GM13976 (cell line): ENCODE measurements at regions of chr17 and their contacts with region 1.

Region 1: DNA sequence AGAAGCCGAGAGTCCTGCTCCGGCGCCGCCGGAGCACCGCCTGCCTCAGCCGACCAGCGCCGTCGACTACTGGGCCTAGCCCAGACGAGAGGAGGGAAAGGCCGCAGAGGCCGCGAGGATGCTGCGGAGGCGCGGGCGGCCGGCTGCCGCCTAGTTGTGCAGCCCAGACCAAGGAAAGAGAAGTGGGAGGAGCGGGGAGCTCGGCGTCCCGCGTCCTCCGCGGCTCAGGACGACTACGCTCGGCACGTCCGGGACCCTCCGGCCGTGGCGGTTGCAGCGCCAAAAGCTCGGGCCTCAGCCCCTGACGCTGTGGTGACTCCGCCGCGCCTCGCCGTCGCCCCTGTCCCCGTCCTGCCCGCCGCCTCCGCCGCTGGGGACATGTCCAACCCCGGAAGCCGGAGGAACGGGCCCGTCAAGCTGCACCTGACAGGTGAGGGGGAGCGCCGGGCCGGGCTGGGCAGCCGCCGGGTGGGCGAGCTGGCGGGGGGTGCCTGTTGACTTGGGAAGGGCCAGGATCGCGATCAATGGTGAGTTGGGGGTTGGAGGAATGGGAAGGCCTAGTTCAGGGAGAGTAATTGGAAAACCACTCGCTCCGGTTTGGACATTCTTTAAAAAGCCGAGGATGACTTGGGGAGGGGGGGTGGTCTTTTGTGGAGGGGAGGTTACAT is 37.7 kb downstream of the RNF135 start:
- DNase-seq: peak; percentile 78
- CTCF ChIP-seq: no peak

Region 2: DNA sequence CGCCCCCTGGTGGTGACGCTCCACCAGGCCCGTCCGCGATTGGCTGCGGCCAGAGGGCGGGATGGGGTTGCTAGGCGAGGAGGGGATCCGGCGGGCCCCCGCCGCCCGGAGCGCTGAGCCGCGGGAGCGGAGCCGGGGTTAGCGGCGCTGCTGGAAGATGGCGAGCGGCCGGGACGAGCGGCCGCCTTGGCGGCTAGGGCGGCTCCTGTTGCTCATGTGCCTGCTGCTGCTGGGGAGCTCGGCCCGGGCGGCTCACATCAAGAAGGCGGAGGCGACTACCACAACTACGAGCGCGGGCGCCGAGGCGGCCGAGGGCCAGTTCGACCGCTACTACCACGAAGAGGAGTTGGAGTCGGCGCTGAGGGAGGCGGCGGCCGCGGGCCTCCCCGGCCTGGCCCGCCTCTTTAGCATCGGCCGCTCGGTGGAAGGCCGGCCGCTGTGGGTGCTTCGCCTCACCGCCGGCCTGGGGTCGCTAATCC is 629.6 kb before region 1 on chr17 and contains the start of gene CPD:
- in situ Hi-C with region 1: no loop called
- DNase-seq: peak; percentile 98
- CTCF ChIP-seq: no peak

Region 3: GRCh38 chr17:30600049-30600829 is 408.3 kb before region 1 on chr17:
- in situ Hi-C with region 1: no loop called
- DNase-seq: peak; percentile 86
- CTCF ChIP-seq: peak; percentile 31

Region 4: GRCh38 chr17:31373150-31374093 is 364.9 kb after region 1 on chr17:
- in situ Hi-C with region 1: loop called (anchors 25 kb)
- DNase-seq: no peak
- CTCF ChIP-seq: peak; percentile 11